ENCODE measurements at regions of chr2 and their contacts with region 1.

Region 1: GRCh38 chr2:38740851-38741731 is 10.1 kb downstream of the SRSF7 start:
- DNase-seq: peak in 3 of 4 experiments; percentile 23 to 38 (median 37)
- ATAC-seq: peak; percentile 18; the same call in 2 of the 3 replicates
- H3K4me3 ChIP-seq: no peak overlapping the region
- H3K27ac ChIP-seq: no peak overlapping the region
- H3K4me1 ChIP-seq: no peaks in the 10 kb centered on the region
- H3K27me3 ChIP-seq: no peaks in the 10 kb centered on the region
- CTCF ChIP-seq: peak; percentile 40 to 73 (median 40); a peak in 4 of 6 replicates
- EP300 ChIP-seq: no peak
- POLR2A ChIP-seq: no peak
- RAD21 ChIP-seq: peak; percentile 61 to 65

Region 2: DNA sequence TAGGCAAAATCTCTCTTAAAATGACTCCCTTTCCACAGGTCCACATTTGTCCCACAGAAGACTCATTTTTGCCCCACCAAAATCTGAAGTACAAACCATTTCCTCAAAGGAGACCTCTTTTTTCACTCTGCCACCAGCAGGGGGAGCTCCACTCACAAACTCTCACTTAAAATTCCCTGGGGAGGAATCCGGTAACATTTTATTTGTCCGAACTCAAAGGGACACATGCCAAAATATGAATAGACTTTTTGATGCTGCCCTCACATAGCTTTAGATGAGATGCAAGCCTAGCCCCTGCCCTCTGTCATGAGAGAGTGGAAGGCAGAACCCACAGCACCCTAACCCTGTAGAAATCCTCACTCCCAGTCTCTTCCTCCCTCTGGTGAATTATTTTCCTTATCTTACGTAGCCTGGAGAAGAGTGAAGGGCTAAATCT is 758.9 kb before region 1 on chr2:
- CTCF ChIA-PET with region 1: interaction called, 3 read pairs
- POLR2A ChIA-PET with region 1: no interaction called
- in situ Hi-C with region 1: loop called (anchors 25 kb)
- intact Hi-C with region 1: no loop called
- DNase-seq: peak; percentile 27 to 70 (median 36)
- ATAC-seq: peak; percentile 59; the same call in 2 of the 3 replicates
- H3K4me3 ChIP-seq: no peak overlapping the region
- H3K27ac ChIP-seq: no peak overlapping the region
- H3K4me1 ChIP-seq: 0 out of 5 replicates have a peak, but pooled peaks cover 0 to 4% of the 10 kb centered on the region in 2 experiments
- H3K27me3 ChIP-seq: no peaks in the 10 kb centered on the region; a peak in 1 of 5 replicates
- CTCF ChIP-seq: peak; percentile 63 to 80 (median 77); a peak in 5 of 6 replicates
- EP300 ChIP-seq: no peak
- POLR2A ChIP-seq: no peak
- RAD21 ChIP-seq: peak; percentile 69 to 76

Region 3: GRCh38 chr2:38323623-38324022 is 417.5 kb before region 1 on chr2:
- CTCF ChIA-PET with region 1: no interaction called
- POLR2A ChIA-PET with region 1: no interaction called
- in situ Hi-C with region 1: loop called (anchors 10 kb)
- intact Hi-C with region 1: loop called (anchors 5 kb)
- DNase-seq: no peak
- ATAC-seq: no peak
- H3K4me3 ChIP-seq: no peak overlapping the region
- H3K27ac ChIP-seq: no peak overlapping the region
- H3K4me1 ChIP-seq: 0 out of 5 replicates have a peak, but pooled peaks cover 3 to 5% of the 10 kb centered on the region in 2 experiments
- H3K27me3 ChIP-seq: no peaks in the 10 kb centered on the region
- CTCF ChIP-seq: no peak
- EP300 ChIP-seq: no peak
- POLR2A ChIP-seq: no peak
- RAD21 ChIP-seq: no peak

Region 4: GRCh38 chr2:38581193-38582147 is 159.6 kb before region 1 on chr2:
- CTCF ChIA-PET with region 1: interaction called, 8 read pairs
- POLR2A ChIA-PET with region 1: interaction called, 22 read pairs
- in situ Hi-C with region 1: no loop called
- intact Hi-C with region 1: loop called (anchors 1 kb)
- DNase-seq: peak; percentile 24 to 82 (median 38)
- ATAC-seq: peak; percentile 84
- H3K4me3 ChIP-seq: no peak overlapping the region
- H3K27ac ChIP-seq: no peak overlapping the region
- H3K4me1 ChIP-seq: no peaks in the 10 kb centered on the region
- H3K27me3 ChIP-seq: no peaks in the 10 kb centered on the region
- CTCF ChIP-seq: peak; percentile 52 to 80 (median 66)
- EP300 ChIP-seq: no peak; the same call in 1 of the 2 replicates
- POLR2A ChIP-seq: no peak
- RAD21 ChIP-seq: peak; percentile 79 to 83

Region 5: GRCh38 chr2:39718483-39718882 is 977.4 kb after region 1 on chr2:
- CTCF ChIA-PET with region 1: interaction called, 10 read pairs
- POLR2A ChIA-PET with region 1: no interaction called
- in situ Hi-C with region 1: no loop called
- intact Hi-C with region 1: no loop called
- DNase-seq: no peak
- ATAC-seq: peak; percentile 44; the same call in 2 of the 3 replicates
- H3K4me3 ChIP-seq: no peak overlapping the region
- H3K27ac ChIP-seq: no peak overlapping the region
- H3K4me1 ChIP-seq: no peaks in the 10 kb centered on the region
- H3K27me3 ChIP-seq: peaks cover 9 to 19% of the 10 kb centered on the region in 2 experiments; a peak in 4 of 5 replicates
- CTCF ChIP-seq: no peak
- EP300 ChIP-seq: no peak
- POLR2A ChIP-seq: no peak
- RAD21 ChIP-seq: no peak